ENCODE measurements at regions of chr10 and their contacts with region 1.

Region 1: GRCh38 chr10:22259280-22259679 is 41.5 kb upstream of the EBLN1 start:
- DNase-seq: no peak
- H3K4me3 Mint-ChIP-seq: no peak overlapping the region
- H3K27ac Mint-ChIP-seq: no peak overlapping the region
- H3K4me1 Mint-ChIP-seq: no peaks in the 10 kb centered on the region
- H3K27me3 Mint-ChIP-seq: no peaks in the 10 kb centered on the region
- CTCF ChIP-seq: no peak

Region 2: DNA sequence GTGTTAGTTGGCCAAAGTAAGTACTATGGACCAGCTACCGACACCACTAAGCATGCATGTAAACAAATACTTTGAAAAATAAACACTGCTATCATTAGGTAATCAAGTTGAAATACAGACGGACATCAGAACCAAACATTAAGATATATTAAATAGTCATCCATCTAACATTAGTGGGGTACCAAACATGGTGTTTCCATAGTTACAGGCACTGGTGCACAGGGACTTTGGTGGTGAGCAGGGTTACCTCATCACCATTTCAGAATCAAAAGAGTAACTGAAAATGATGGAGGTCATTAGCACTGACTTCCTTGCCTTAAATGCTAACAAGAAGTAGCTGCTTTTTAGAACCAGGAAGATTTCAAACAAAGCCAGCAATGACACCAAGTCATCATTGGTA is 65.3 kb before region 1 on chr10:
- CTCF ChIA-PET with region 1: no interaction called
- intact Hi-C with region 1: loop called (anchors 2 kb)
- DNase-seq: no peak
- H3K4me3 Mint-ChIP-seq: no peak overlapping the region
- H3K27ac Mint-ChIP-seq: no peak overlapping the region
- H3K4me1 Mint-ChIP-seq: no peaks in the 10 kb centered on the region
- H3K27me3 Mint-ChIP-seq: no peaks in the 10 kb centered on the region
- CTCF ChIP-seq: no peak

Region 3: DNA sequence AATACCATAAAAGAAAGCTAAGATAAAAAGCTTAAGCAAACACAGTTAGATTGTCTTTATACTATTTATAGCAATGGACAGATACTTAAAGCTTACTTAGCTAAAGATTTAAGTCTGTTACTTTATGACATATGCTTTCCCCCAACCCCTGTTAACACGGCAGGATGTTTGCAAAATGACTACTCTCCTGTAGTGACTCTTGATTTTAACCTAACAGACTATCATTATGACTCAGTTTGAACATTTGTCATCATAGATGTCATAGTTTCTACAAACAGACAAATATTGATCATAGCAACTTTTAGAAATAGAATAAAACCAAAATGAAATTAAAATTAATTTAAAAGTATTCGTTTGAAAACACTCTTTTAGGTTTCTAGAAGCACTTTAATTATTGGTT is 49.1 kb after region 1 on chr10:
- CTCF ChIA-PET with region 1: no interaction called
- intact Hi-C with region 1: no loop called
- DNase-seq: no peak
- H3K4me3 Mint-ChIP-seq: no peak overlapping the region
- H3K27ac Mint-ChIP-seq: no peak overlapping the region
- H3K4me1 Mint-ChIP-seq: no peaks in the 10 kb centered on the region
- H3K27me3 Mint-ChIP-seq: no peaks in the 10 kb centered on the region
- CTCF ChIP-seq: no peak